ENCODE measurements at regions of chr1 and their contacts with region 1.

Region 1: DNA sequence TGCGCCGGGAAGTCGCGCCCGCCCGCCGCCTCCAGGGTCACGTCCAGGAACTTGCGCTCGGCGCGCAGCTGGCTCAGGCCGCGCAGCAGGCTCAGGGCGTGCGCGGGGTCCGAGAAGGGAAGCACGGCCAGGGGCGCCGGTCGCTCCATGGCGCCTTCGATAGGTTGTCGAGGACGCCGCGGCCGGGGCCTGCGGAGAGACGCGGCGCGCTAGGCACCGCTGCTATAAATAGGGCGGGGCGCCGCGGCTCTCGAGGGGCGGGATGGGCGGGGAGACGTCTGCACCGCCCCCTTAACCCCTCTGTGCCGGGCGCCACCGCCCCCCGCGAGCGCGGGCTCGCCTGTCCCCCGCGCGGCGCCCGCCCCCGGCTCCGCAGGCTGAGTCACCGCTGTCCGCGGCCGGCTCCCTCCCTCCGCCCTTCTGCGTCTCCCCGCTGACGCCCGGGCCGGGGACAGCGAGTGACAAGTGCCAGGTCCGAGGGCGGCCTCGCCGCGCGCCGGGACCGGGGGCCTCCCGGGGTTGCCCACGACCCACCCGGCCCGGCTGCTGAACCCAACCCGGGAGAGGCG is at the start of gene KLHL21:
- DNase-seq: peak; percentile 76 to 99 (median 90)

Region 2: GRCh38 chr1:6454856-6455751 is 147.6 kb before region 1 on chr1:
- intact Hi-C with region 1: no loop called
- DNase-seq: peak in 1 of 10 donors; percentile 78

Region 3: DNA sequence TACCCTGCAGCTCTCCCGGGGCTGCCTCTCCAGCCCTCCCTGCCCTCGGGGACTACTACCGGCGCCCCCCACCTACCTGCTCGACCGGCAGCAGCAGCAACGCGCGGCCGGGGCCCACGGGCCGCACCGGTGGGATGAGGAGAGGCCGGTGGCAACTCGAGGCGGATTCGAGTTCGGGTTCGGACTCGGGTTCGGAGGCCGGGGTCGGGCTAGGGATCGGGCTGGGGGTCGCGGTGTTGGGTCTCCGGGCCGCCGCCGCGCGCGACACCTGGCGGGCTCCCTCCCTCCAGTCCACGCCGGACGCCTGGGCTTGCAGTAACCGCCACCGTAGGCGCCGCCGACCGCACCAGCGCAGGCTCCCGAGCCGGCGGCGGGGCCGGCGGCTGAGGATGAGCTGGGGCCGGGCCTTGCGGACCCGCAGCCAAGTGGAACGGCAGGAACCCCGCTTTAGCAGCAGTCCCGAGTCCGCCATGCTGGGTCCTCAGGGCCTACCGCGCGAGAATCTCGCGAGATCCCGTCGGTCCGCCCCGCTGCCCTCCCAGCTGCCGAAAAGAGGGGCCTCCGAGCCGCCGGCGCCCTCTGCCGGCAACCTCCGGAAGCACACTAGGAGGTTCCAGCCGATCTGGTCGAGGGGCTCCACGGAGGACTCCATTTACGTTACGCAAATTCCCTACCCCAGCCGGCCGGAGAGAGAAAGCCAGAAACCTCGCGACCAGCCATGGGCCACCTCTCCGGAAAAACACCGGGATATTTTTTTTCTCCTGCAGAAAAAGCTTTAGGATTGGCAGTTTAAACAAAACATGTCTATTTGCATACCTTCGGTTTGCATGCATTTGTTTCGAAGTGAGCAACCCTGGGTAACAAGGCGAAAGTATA is 48.5 kb before region 1 on chr1 and contains the start of gene NOL9:
- intact Hi-C with region 1: loop called (anchors 5 kb)
- DNase-seq: peak; percentile 87 to 99 (median 94)

Region 4: GRCh38 chr1:6624710-6625583 is 22.2 kb after region 1 on chr1 and contains the start of gene THAP3:
- intact Hi-C with region 1: loop called (anchors 1 kb)
- DNase-seq: peak; percentile 69 to 97 (median 82)

Region 5: GRCh38 chr1:6667139-6667538 is 64.4 kb after region 1 on chr1:
- intact Hi-C with region 1: no loop called
- DNase-seq: no peak